Calu3 (cell line): ENCODE measurements at regions of chr17 and their contacts with region 1.

Region 1: GRCh38 chr17:49031965-49032928 is 35.1 kb downstream of the IGF2BP1 start:
- DNase-seq: peak; percentile 74
- H3K4me3 Mint-ChIP-seq: peak overlapping the region; percentile 2
- H3K27ac Mint-ChIP-seq: no peak overlapping the region
- H3K4me1 Mint-ChIP-seq: peaks cover 11% of the 10 kb centered on the region
- H3K27me3 Mint-ChIP-seq: no peaks in the 10 kb centered on the region
- CTCF ChIP-seq: peak; percentile 90

Region 2: DNA sequence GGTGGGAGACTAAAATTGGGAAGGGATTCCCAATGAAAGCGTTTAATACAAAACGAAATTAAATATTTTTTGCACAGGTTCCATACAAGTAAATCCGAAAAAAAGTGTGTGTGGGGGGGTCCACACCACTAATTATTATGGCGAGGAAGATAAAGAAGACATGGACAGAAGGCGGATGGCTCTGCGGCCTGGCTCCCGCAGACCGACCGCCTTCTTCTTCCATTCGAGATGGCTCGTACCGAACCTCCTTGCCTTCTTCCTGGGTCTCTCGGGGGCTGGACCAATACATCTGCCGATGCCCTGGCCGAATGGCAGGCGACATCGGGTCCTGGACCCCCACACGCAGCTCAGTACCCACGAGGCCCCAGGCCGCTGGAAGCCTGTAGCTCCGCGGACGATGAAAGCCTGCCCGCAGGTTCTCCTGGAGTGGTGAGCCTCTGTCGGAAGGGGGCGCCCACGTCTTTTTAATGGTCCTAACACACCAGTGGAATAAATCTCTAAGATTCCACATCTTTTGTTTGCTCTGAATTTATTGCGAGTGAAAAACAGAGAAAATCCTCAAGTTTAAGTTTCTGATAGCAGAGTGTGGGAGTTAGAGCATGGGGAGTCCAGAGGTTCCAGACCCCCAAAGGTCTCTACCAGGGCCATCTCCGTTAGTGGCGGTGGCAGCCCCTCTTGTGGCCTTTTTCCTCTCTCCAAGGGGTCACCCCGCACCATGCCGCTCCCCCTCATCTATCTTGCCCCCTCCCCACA is 307.8 kb before region 1 on chr17:
- CTCF ChIA-PET with region 1: interaction called, 11 read pairs
- intact Hi-C with region 1: no loop called
- DNase-seq: peak; percentile 96
- H3K4me3 Mint-ChIP-seq: peak overlapping the region; percentile 34
- H3K27ac Mint-ChIP-seq: no peak overlapping the region
- H3K4me1 Mint-ChIP-seq: peaks cover 21% of the 10 kb centered on the region
- H3K27me3 Mint-ChIP-seq: peaks cover 45% of the 10 kb centered on the region
- CTCF ChIP-seq: peak; percentile 94

Region 3: DNA sequence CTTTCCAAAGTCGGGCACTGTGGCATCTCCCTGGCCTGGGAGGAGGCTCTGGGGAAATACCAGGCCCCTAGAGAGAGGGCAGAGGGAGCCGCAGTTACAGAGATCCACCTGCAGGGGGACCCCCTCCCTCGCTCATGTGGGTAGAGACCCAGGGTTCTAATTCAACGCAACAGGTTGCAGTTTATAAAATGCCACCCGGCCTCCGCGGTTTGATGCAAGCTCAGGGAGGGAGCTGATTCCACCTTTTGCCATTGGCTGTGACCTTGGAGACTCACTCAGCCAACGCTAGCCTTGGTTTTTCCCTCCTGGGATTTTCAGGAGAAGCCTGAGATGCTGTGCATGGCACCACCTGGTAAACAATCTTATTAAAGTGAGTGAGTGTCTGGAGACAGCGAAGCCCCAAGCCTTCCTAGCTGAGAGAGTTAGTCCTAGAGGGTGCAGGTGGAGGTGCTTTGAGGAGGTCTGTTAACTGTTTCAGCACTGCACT is 227.3 kb before region 1 on chr17:
- CTCF ChIA-PET with region 1: no interaction called
- intact Hi-C with region 1: loop called (anchors 1 kb)
- DNase-seq: peak; percentile 90
- H3K4me3 Mint-ChIP-seq: no peak overlapping the region
- H3K27ac Mint-ChIP-seq: no peak overlapping the region
- H3K4me1 Mint-ChIP-seq: peaks cover 38% of the 10 kb centered on the region
- H3K27me3 Mint-ChIP-seq: no peaks in the 10 kb centered on the region
- CTCF ChIP-seq: peak; percentile 99

Region 4: GRCh38 chr17:48892940-48893645 is 139.2 kb before region 1 on chr17:
- CTCF ChIA-PET with region 1: interaction called, 25 read pairs
- intact Hi-C with region 1: loop called (anchors 5 kb)
- DNase-seq: no peak
- H3K4me3 Mint-ChIP-seq: peak overlapping the region; percentile 98
- H3K27ac Mint-ChIP-seq: peak overlapping the region; percentile 98
- H3K4me1 Mint-ChIP-seq: peaks cover 7% of the 10 kb centered on the region
- H3K27me3 Mint-ChIP-seq: peaks cover 8% of the 10 kb centered on the region
- CTCF ChIP-seq: no peak

Region 5: GRCh38 chr17:48961516-48962233 is 70.6 kb before region 1 on chr17:
- CTCF ChIA-PET with region 1: interaction called, 12 read pairs
- intact Hi-C with region 1: no loop called
- DNase-seq: peak; percentile 71
- H3K4me3 Mint-ChIP-seq: peak overlapping the region; percentile 10
- H3K27ac Mint-ChIP-seq: no peak overlapping the region
- H3K4me1 Mint-ChIP-seq: peaks cover 20% of the 10 kb centered on the region
- H3K27me3 Mint-ChIP-seq: peaks cover 48% of the 10 kb centered on the region
- CTCF ChIP-seq: no peak

Region 6: DNA sequence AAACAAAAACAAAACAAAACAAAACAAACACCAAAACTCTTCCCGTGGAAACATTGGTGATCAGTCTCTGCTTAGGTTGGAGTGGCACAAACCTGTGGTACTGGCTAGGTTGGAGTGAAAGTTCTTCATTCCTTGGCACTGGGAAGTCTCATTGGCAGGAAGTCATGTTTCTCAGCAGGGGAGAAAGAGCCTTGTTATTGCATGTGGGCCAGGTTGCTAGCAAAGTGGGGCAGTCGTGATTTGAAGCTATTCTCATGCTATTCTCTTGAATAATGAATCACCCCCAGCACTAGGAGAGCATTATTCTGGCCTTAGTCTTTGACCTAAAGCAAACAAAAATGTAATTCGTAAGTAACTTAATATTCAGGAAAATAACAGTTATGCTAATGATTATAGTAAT is 76.1 kb after region 1 on chr17:
- CTCF ChIA-PET with region 1: no interaction called
- intact Hi-C with region 1: no loop called
- DNase-seq: no peak
- H3K4me3 Mint-ChIP-seq: no peak overlapping the region
- H3K27ac Mint-ChIP-seq: no peak overlapping the region
- H3K4me1 Mint-ChIP-seq: peaks cover 29% of the 10 kb centered on the region
- H3K27me3 Mint-ChIP-seq: no peaks in the 10 kb centered on the region
- CTCF ChIP-seq: no peak

Region 7: DNA sequence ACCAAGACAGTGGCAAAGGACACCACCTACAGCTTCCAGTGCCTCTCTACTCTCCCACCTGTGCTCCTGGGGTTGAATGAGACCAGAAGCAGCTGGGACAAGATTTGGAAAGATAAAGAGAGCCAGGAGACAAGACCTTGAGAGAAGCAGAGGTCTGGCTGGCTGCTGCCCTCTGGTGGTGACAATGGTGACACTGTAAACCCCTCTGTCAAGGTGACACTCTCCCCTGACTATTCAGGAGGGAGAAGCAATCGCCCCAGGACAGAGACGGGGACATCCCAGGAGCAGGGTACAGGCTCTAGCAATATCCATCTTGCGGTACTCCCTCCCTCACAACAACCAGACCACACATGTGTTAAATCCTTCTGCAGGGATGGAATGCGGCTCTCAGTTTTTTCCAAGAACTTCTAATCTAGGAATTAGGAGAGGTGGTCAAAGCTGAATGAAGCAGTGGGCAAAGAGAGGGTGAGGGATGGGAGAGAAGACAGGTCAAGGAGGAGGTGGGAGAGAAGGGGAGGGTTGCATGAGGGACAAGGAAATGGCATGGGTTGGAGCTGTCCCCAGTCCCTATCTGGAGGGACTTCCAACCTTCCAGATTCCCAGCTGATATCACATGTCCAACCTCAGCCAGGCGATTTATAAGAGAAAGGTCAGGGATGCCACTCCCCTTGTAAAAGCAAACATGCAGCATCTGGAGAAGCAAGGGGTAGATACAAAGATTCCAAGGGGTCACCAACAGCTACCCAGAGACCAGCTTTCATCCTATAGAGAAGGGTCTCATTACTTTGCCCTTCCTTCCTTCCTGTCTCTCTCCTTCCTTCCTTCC is 195.4 kb after region 1 on chr17:
- CTCF ChIA-PET with region 1: interaction called, 6 read pairs
- intact Hi-C with region 1: loop called (anchors 10 kb)
- DNase-seq: peak; percentile 90
- H3K4me3 Mint-ChIP-seq: no peak overlapping the region
- H3K27ac Mint-ChIP-seq: no peak overlapping the region
- H3K4me1 Mint-ChIP-seq: peaks cover 12% of the 10 kb centered on the region
- H3K27me3 Mint-ChIP-seq: peaks cover 94% of the 10 kb centered on the region
- CTCF ChIP-seq: peak; percentile 89